Activated B cell treated with CpG ODN at 0.5 μM for 24 hours (primary cell): ENCODE measurements at regions of chr3 and their contacts with region 1.

Region 1: DNA sequence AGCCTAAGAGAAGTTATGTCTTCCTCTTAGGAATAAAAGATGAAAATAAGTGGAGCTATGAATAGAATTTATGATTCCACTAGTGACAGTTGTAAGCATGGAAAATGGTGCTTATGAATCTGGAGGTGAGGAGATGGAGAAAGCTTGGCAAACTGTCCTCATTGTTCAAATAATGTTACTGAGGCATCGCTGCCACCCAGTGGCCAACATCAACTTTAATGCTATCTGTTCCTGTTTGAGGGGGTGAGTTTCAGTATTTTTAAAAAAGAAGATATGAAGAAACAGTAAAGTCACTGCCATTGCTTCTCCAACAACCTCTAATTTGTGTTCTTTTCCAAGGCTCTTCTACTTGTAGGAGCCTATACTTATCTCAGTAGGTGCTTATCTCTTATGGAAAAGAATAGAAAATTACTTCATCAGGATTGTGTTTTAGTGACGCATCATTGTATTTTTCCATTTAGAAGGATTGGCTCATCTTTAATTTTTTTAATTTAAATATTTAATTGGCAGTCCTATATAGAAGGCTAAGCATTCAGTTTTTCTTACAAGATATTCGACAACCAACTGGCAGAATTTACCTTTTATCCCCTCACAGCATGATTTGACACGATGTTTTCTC is 260.4 kb upstream of the P2RY1 start:
- DNase-seq: no peak
- ATAC-seq: peak; percentile 52
- H3K4me3 Mint-ChIP-seq: no peak overlapping the region
- H3K27ac Mint-ChIP-seq: no peak overlapping the region
- H3K4me1 Mint-ChIP-seq: no peaks in the 10 kb centered on the region
- H3K27me3 Mint-ChIP-seq: no peaks in the 10 kb centered on the region
- CTCF ChIP-seq: no peak

Region 2: GRCh38 chr3:151468284-151468917 is 1106.2 kb before region 1 on chr3:
- CTCF ChIA-PET with region 1: no interaction called
- POLR2A ChIA-PET with region 1: no interaction called
- intact Hi-C with region 1: loop called (anchors 1 kb)
- DNase-seq: no peak
- ATAC-seq: peak; percentile 56
- H3K4me3 Mint-ChIP-seq: no peak overlapping the region
- H3K27ac Mint-ChIP-seq: no peak overlapping the region
- H3K4me1 Mint-ChIP-seq: peaks cover 6% of the 10 kb centered on the region
- H3K27me3 Mint-ChIP-seq: peaks cover 2% of the 10 kb centered on the region
- CTCF ChIP-seq: no peak

Region 3: GRCh38 chr3:152071924-152072323 is 502.6 kb before region 1 on chr3:
- CTCF ChIA-PET with region 1: interaction called, 9 read pairs
- POLR2A ChIA-PET with region 1: no interaction called
- intact Hi-C with region 1: loop called (anchors 1 kb)
- DNase-seq: no peak
- ATAC-seq: peak; percentile 66
- H3K4me3 Mint-ChIP-seq: no peak overlapping the region
- H3K27ac Mint-ChIP-seq: no peak overlapping the region
- H3K4me1 Mint-ChIP-seq: no peaks in the 10 kb centered on the region
- H3K27me3 Mint-ChIP-seq: no peaks in the 10 kb centered on the region
- CTCF ChIP-seq: no peak

Region 4: DNA sequence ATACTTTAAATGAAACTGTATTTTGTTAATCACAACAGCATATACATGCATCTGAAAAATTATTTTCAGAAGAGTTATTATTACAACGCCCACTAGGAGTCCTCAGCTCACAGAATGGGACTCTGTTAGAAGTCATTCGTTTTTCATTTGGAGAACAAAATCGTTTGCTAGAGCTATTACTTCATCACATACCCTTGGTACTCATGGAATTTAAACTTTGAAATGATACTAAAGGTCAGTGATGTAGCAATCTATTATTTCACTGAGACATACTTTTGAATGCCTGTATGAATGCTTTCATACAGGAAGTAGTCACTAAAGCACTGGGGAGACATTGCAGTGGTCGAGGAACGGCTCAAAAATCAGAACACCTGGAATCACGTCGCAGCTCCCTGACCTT is 107.8 kb before region 1 on chr3:
- CTCF ChIA-PET with region 1: interaction called, 29 read pairs
- POLR2A ChIA-PET with region 1: no interaction called
- intact Hi-C with region 1: no loop called
- DNase-seq: no peak
- ATAC-seq: peak; percentile 69
- H3K4me3 Mint-ChIP-seq: no peak overlapping the region
- H3K27ac Mint-ChIP-seq: peak overlapping the region; percentile 71
- H3K4me1 Mint-ChIP-seq: peaks cover 22% of the 10 kb centered on the region
- H3K27me3 Mint-ChIP-seq: no peaks in the 10 kb centered on the region
- CTCF ChIP-seq: no peak

Region 5: DNA sequence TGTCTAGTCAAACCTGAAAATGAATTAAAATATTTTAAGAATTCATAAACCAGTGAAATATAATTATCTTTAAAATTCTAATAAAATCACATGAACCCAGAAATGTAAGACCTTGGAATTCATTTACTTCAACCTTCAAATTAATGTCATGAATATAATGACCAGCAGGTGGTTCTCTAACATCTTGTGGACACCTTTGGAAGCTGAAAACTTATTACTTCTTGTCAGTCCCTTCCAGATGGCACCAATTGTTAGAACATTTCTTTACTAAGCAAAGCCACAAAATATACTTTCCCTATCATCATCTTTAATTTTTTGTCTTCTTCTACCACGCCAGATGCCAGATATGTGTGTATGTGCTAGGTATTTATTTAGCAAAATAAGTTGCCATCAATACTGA is 65.9 kb before region 1 on chr3:
- CTCF ChIA-PET with region 1: interaction called, 13 read pairs
- POLR2A ChIA-PET with region 1: no interaction called
- intact Hi-C with region 1: loop called (anchors 1 kb)
- DNase-seq: no peak
- ATAC-seq: no peak
- H3K4me3 Mint-ChIP-seq: peak overlapping the region; percentile 6
- H3K27ac Mint-ChIP-seq: peak overlapping the region; percentile 82
- H3K4me1 Mint-ChIP-seq: peaks cover 88% of the 10 kb centered on the region
- H3K27me3 Mint-ChIP-seq: no peaks in the 10 kb centered on the region
- CTCF ChIP-seq: no peak

Region 6: GRCh38 chr3:152524198-152525140 is 50.1 kb before region 1 on chr3:
- CTCF ChIA-PET with region 1: interaction called, 12 read pairs
- POLR2A ChIA-PET with region 1: no interaction called
- intact Hi-C with region 1: loop called (anchors 1 kb)
- DNase-seq: no peak
- ATAC-seq: peak; percentile 77
- H3K4me3 Mint-ChIP-seq: no peak overlapping the region
- H3K27ac Mint-ChIP-seq: no peak overlapping the region
- H3K4me1 Mint-ChIP-seq: peaks cover 33% of the 10 kb centered on the region
- H3K27me3 Mint-ChIP-seq: no peaks in the 10 kb centered on the region
- CTCF ChIP-seq: peak; percentile 96

Region 7: DNA sequence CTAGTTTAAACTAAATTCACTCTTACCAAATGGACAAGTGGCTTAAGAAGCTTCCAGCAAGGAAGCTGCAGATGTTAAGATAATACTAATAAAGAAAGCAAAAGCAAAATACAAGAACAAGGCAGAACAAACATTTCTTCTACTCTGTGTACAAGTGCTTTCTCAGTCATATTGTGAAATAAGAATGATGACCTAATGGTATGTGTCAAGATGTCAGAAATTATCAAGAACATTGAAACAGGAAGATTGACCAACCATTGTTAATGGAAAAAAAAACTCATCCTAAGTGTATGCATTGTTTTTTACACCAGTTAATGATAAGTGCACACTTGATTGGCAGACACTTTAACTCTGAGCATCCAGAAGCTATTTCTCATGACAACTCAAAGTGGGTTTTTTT is 195.0 kb after region 1 on chr3:
- CTCF ChIA-PET with region 1: no interaction called
- POLR2A ChIA-PET with region 1: no interaction called
- intact Hi-C with region 1: no loop called
- DNase-seq: no peak
- ATAC-seq: no peak
- H3K4me3 Mint-ChIP-seq: no peak overlapping the region
- H3K27ac Mint-ChIP-seq: no peak overlapping the region
- H3K4me1 Mint-ChIP-seq: no peaks in the 10 kb centered on the region
- H3K27me3 Mint-ChIP-seq: peaks cover 4% of the 10 kb centered on the region
- CTCF ChIP-seq: no peak

Region 8: DNA sequence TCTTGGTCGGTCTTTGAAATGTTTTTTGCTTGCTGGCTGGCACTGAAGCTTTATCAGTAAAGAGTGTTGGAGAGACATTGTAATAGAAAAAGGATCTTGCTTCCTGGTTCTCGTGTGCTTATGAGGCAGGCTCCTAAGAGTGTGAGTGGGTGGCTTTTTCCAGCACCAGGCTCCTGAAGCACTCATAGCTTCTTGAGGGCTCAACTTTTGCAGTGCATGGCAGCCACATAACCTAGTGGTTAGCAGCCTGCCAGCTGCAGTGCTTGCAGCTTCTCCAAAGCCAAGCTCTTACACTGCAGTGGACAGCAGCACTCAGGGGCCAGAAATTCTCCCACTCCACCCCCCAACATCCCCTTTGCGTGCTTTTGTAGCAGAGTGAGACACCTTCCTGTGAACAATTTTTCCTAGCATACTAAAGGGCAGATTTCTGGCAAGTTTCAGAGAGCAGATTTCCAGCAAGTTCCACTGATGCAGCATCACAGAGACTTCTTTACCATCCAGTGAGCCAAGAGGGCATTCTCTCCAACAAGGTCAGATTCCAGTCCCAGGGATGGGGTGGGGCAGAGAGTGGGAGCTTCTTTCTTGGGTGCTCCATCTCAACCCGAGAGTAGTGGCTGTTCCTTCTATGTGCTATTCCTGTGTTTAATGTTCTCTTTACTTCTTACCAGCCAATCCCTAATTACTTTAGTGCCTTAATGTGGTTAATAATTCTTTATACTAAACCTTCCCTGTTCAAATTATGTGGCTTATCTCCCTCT is 1530.8 kb after region 1 on chr3:
- CTCF ChIA-PET with region 1: no interaction called
- POLR2A ChIA-PET with region 1: no interaction called
- intact Hi-C with region 1: no loop called
- DNase-seq: no peak
- ATAC-seq: no peak
- H3K4me3 Mint-ChIP-seq: no peak overlapping the region
- H3K27ac Mint-ChIP-seq: no peak overlapping the region
- H3K4me1 Mint-ChIP-seq: no peaks in the 10 kb centered on the region
- H3K27me3 Mint-ChIP-seq: peaks cover 2% of the 10 kb centered on the region
- CTCF ChIP-seq: no peak